ENCODE measurements at regions of chr21 and their contacts with region 1.

Region 1: GRCh38 chr21:32096411-32096810 is 182.4 kb downstream of the MIS18A start:
- DNase-seq: peak; percentile 63
- ATAC-seq: peak; percentile 83
- H3K4me3 Mint-ChIP-seq: no peak overlapping the region
- H3K27ac Mint-ChIP-seq: no peak overlapping the region
- H3K4me1 Mint-ChIP-seq: peaks cover 18% of the 10 kb centered on the region
- H3K27me3 Mint-ChIP-seq: peaks cover 13% of the 10 kb centered on the region
- CTCF ChIP-seq: peak; percentile 41; the same call in 1 of the 2 replicates

Region 2: GRCh38 chr21:31866077-31866511 is 230.3 kb before region 1 on chr21:
- CTCF ChIA-PET with region 1: interaction called, 11 read pairs
- POLR2A ChIA-PET with region 1: no interaction called
- DNase-seq: peak; percentile 93
- ATAC-seq: peak; percentile 95
- H3K4me3 Mint-ChIP-seq: no peak overlapping the region
- H3K27ac Mint-ChIP-seq: no peak overlapping the region
- H3K4me1 Mint-ChIP-seq: peaks cover 8% of the 10 kb centered on the region
- H3K27me3 Mint-ChIP-seq: peaks cover 21% of the 10 kb centered on the region
- CTCF ChIP-seq: peak; percentile 89

Region 3: DNA sequence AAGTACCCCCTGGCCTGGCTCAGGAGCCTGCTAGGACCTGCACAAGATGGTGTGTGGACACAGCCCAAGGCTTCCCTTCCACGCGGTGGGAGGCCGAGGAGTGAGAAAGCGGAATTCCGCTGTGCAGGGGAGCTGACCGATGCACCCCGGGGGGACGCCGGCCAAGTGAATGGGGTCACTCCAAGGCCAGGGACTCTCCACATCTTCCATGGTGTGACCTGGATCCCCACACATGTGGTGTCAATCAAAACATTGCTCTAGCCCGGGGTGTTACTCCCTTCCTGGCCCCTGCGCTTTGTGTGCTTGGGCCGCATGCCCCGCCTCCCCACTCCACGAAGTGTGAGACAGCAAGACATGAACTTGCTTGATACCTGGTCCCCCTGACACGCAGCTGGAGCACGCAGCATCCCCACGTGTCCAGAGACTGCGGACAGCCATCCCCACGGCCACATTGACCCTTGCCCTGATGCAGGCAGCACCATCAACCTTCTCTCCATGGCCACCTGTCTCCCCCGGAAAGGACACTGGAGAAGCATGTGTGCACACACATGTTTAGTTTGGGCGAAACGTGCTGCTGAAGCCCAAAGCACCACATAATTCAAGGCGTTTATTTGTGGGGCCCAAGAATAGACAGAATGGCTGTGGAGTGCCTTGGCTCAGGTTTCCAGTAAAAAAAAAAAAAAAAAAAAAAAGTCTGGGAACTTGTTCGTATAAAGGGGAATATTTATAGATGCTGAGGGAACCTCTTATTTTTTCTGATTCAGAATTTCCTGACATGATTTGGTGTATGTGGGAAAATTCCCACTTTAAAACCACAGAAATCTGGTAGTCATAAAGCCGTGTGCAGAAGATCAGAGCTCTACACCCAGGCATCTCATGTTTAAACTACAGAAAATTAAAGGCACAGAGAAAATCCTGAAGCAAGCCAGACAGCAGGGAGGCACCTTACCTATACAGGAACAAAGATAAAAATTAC is 51.9 kb before region 1 on chr21:
- CTCF ChIA-PET with region 1: interaction called, 4 read pairs
- POLR2A ChIA-PET with region 1: interaction called, 10 read pairs
- DNase-seq: no peak
- ATAC-seq: no peak
- H3K4me3 Mint-ChIP-seq: no peak overlapping the region
- H3K27ac Mint-ChIP-seq: no peak overlapping the region
- H3K4me1 Mint-ChIP-seq: peaks cover 12% of the 10 kb centered on the region
- H3K27me3 Mint-ChIP-seq: peaks cover 12% of the 10 kb centered on the region
- CTCF ChIP-seq: no peak

Region 4: DNA sequence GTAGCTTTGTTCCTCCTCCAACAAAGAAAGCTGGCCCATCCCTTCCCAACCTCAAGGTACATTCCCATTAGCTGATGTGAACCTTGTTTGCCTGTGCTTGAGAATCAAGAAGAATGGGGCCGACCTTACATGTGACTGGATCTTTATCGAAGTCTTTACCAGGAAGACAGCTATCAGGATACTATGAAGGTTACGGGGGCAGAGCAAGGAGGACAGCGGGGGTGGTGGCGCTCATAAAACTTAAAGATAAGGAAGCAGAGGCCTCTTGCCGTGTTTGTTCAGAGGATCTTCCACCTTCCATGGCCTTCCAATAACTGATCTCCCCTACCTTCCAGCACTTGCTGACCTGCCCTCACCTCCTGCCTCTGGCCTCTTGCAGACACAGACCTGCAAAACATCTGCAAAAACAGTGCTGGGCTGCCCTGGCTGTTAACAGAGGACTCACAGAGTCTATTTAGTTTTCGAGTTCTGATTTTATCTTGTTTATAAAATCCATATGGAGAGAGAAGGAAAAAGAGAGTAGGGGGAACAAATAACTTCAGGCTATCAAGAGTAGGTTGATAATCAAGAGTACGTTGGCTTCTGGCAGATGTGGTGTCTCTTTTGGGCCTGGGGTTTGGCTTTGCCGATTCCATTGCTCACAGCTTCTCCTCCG is 25.6 kb before region 1 on chr21:
- CTCF ChIA-PET with region 1: interaction called, 19 read pairs
- POLR2A ChIA-PET with region 1: interaction called, 7 read pairs
- DNase-seq: no peak
- ATAC-seq: no peak
- H3K4me3 Mint-ChIP-seq: no peak overlapping the region
- H3K27ac Mint-ChIP-seq: 0 out of 2 replicates have a peak overlapping the region, but pooled peaks have one; percentile 8
- H3K4me1 Mint-ChIP-seq: peaks cover 9% of the 10 kb centered on the region
- H3K27me3 Mint-ChIP-seq: no peaks in the 10 kb centered on the region
- CTCF ChIP-seq: no peak

Region 5: DNA sequence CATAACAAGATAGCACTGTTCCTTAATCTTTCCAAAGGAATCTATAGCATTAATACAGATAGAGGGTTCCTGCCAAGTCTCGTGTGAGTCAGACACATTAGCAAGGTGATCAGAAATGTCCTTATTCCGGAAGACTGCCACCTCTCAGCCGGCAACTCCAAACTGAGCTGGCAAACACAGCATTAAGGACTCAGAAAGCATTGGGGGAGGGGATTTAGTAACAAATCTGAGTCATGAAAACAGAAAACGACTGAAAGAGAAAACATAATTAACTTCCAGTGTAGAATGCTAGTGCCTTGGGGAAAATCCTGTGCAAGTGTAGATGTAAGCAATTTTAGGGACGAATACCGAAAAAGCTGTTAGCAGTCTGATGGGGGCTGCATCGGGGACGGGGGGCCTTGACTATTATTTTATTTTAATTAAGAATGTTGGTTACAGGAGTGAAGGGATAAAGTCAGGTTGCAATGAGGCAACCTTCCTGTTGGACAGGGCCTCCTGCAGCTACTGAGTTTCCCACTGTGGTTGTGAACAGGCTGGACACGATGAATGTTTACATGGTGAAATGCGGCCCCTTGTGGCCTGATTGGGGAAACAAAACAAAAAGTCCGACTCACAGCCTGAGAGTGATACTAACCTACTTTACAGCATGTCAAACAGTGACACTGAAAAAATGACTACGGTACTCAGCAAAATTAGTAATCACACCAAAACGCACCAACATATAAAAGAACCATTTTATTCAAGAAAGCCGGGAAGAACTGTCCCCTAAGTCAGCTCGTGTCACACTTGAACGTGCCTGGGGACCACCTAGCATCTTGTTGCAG is 161.8 kb after region 1 on chr21:
- CTCF ChIA-PET with region 1: interaction called, 43 read pairs
- POLR2A ChIA-PET with region 1: interaction called, 9 read pairs
- DNase-seq: peak; percentile 73
- ATAC-seq: peak; percentile 91
- H3K4me3 Mint-ChIP-seq: no peak overlapping the region
- H3K27ac Mint-ChIP-seq: no peak overlapping the region
- H3K4me1 Mint-ChIP-seq: peaks cover 5% of the 10 kb centered on the region
- H3K27me3 Mint-ChIP-seq: no peaks in the 10 kb centered on the region
- CTCF ChIP-seq: peak; percentile 66

Region 6: DNA sequence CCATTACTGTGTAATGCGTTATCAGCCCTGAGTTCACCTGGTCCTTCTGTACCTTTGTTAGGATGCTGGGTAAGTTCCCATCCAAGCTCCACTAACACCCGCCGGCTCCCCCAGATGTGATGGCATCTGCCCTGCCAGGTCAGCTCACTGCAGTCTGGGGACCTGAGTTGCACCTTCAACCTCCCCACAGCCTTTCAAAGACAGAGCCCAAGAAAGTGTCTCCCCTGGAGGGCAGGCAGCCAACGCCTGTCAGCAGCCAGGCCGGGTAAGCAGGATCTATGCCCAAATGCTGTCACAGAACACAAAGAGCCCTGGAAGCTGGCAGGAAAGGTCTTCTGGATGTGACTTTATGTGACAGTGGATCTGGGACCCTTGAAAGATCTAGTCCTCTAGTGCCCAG is 215.9 kb after region 1 on chr21:
- CTCF ChIA-PET with region 1: no interaction called
- POLR2A ChIA-PET with region 1: no interaction called
- DNase-seq: no peak
- ATAC-seq: no peak
- H3K4me3 Mint-ChIP-seq: no peak overlapping the region
- H3K27ac Mint-ChIP-seq: no peak overlapping the region
- H3K4me1 Mint-ChIP-seq: no peaks in the 10 kb centered on the region
- H3K27me3 Mint-ChIP-seq: no peaks in the 10 kb centered on the region
- CTCF ChIP-seq: no peak